BJ (cell line): ENCODE measurements at regions of chr6 and their contacts with region 1.

Region 1: GRCh38 chr6:46221222-46221793 is 50.5 kb upstream of the ENPP5 start:
- DNase-seq: no peak
- H3K4me3 ChIP-seq: no peak overlapping the region
- H3K27me3 ChIP-seq: no peaks in the 10 kb centered on the region
- CTCF ChIP-seq: peak; percentile 85

Region 2: DNA sequence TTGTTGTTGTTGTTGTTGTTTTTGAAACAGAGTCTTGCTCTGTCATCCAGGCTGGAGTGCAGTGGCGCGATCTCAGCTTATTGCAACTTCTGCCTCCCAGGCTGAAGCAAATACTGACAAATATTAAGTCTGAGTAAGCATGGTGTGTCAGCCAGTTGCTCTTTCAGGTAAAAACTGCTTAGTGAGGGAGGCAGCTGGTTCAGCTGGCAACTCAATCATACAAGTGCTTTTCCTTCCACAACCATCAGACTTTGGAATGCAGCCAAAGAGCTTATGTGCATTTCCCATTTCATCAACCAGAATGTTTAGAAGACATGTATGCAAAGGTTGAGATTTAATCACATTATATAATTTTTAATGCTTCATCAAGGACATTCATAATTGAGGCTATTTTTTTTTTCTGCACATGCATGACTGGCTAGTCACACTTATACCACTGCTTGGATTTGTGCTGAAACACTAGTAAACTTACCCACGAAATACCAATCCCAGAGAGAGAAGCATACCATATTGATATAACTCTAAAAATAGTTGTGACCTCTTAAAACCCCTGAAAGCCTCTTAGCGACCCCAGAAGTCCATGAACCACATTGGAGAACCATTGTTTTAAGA is 261.7 kb before region 1 on chr6:
- CTCF ChIA-PET with region 1: no interaction called
- POLR2A ChIA-PET with region 1: no interaction called
- DNase-seq: peak; percentile 24
- H3K4me3 ChIP-seq: no peak overlapping the region
- H3K27me3 ChIP-seq: no peaks in the 10 kb centered on the region; the same call in 1 of the 2 replicates
- CTCF ChIP-seq: no peak

Region 3: DNA sequence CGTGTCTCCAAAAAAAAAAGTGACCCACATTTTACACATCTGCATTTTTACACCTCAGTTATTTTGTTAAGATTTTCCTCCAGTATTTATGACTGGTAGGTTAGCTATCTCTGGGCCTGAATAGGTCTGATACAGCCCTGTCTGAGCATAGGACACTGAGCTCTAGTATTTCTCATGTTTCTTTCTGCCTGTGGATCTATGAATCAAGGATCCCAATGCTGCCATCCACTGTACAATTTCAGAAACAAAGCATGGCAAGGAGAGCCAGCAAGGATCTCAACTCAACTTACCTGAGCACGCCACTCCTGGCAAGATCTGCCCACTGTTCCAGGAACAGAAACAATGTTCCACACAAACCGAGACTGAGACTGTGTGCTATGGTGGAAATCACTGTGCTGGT is 14.1 kb before region 1 on chr6:
- CTCF ChIA-PET with region 1: interaction called, 11 read pairs
- POLR2A ChIA-PET with region 1: no interaction called
- DNase-seq: no peak
- H3K4me3 ChIP-seq: no peak overlapping the region
- H3K27me3 ChIP-seq: no peaks in the 10 kb centered on the region
- CTCF ChIP-seq: no peak

Region 4: DNA sequence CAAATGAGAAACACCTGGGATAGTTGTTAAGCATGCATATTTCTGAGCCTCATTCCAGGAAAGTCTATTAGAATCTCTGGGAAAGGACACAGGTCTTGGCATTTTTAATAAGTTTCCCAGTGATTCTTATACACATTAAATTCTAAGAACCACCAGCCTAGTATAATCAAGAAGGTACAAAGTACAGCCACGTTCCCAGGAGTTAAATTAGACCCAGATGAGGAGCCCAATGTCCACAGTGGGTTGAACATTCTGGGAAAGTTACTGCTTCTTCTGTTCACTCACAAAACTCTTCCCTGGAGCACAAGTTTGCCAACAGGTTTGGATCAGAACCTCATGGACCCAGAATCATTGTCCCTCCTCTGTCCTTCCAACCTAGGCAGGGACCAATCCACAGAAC is 179.6 kb after region 1 on chr6:
- CTCF ChIA-PET with region 1: interaction called, 200 read pairs
- POLR2A ChIA-PET with region 1: no interaction called
- DNase-seq: no peak
- H3K4me3 ChIP-seq: no peak overlapping the region
- H3K27me3 ChIP-seq: no peaks in the 10 kb centered on the region
- CTCF ChIP-seq: no peak

Region 5: GRCh38 chr6:46410334-46410953 is 189.1 kb after region 1 on chr6:
- CTCF ChIA-PET with region 1: interaction called, 200 read pairs
- POLR2A ChIA-PET with region 1: no interaction called
- DNase-seq: no peak
- H3K4me3 ChIP-seq: no peak overlapping the region
- H3K27me3 ChIP-seq: peaks cover 5% of the 10 kb centered on the region
- CTCF ChIP-seq: peak; percentile 58

Region 6: DNA sequence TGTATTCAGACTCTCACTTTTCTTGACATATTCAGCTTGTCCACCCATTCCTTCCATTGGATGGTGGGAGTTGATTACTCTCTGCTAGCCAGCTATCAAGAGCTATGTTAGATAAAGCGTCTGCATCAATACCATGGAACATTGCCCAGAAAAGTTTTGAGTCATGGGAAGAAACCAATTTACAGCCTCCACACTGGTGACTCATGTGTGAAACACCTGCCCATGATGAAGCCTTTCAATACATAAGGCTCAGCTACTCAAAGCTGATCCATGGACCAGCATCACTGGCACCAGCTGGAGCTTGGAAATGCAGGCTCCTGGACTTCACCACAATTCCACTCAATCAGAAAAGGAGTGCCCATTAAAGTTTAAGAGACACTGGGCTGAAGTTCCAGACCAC is 497.8 kb after region 1 on chr6:
- CTCF ChIA-PET with region 1: no interaction called
- POLR2A ChIA-PET with region 1: no interaction called
- DNase-seq: no peak
- H3K4me3 ChIP-seq: no peak overlapping the region
- H3K27me3 ChIP-seq: no peaks in the 10 kb centered on the region
- CTCF ChIP-seq: no peak